ENCODE measurements at regions of chr16 and their contacts with region 1.

Region 1: GRCh38 chr16:7372095-7372494 is 39.5 kb downstream of the RBFOX1 start:
- DNase-seq: no peak

Region 2: DNA sequence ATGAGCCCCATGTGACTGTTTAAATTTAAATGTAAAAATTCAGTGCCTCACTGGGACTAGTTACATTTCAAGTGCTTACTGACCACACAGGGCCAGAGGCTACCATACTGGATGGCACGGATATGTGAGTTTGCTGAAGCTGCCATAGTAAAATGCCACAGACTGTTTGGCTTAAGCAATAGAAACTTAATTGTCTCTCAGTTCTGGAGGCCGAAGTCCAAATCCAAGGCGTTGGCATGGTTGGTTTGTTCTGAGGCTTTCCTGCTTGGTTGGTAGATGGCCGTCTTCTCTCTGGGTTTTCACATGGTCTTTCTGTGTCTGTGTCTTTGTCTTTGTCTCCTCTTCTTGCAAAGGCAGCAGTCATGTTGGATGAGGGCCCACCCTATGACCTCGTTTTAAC is 918.4 kb before region 1 on chr16:
- intact Hi-C with region 1: loop called in 1 of 2 experiments (anchors 5 kb)
- DNase-seq: no peak

Region 3: GRCh38 chr16:6913566-6913965 is 458.5 kb before region 1 on chr16:
- intact Hi-C with region 1: no loop called
- DNase-seq: no peak

Region 4: GRCh38 chr16:7405166-7405852 is 33.2 kb after region 1 on chr16:
- intact Hi-C with region 1: no loop called
- DNase-seq: no peak